Uterus (tissue), 4 donors: ENCODE measurements at regions of chr9 and their contacts with region 1.

Region 1: DNA sequence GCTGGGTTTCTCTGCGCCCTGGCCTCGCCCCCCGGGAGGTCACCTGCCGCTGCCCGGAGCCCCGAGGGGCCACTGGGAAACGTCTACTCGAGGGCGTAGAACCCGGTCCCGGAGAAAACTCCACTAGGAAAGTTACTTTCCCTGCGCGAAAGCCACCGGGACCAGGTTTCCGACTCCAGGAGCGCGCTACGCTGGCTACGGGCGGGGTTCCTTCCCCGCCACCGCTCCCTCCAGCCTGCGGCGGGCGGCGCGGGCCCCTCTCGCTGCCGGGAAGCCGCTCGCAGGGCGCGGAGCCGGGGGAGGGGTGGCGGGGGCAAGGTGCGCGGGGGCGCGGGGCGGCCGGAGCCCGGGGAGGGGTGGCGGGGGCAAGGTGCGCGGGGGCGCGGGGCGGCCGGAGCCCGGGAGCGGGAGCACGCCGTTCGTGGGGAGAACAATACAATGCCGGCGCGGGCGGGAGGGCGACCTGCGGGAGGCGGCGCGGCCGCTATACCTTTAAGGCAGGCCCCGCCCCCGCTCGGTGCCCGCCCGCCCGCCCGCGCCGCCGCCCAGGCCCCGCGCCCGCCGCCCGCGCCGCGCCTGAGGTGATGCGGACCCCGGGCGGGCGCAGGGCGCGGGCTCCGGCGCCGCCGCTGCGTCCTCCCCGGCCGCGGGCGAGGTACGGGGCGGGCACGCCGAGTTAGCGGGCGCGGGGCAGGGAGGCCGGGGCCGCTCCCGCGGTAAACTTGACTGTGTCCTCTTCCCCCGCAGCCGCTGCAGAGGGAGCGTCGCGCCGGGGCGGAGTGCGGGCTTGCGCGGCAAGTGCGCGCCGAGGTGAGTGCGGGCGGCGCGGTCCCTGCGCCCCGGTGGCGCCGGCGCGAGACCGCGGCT is 278.1 kb downstream of the AOPEP start:
- DNase-seq: peak; percentile 54 to 72
- H3K4me3 ChIP-seq: peak overlapping the region; percentile 75 to 88
- H3K27ac ChIP-seq: peak overlapping the region; percentile 100
- H3K4me1 ChIP-seq: peaks cover 0 to 6% of the 10 kb centered on the region in 2 donors
- H3K27me3 ChIP-seq: no peaks in the 10 kb centered on the region
- CTCF ChIP-seq: peak in 1 of 4 experiments; percentile 11
- POLR2A ChIP-seq: peak; percentile 39 to 51

Region 2: GRCh38 chr9:94783102-94783664 is 221.5 kb before region 1 on chr9:
- intact Hi-C with region 1: loop called (anchors 10 kb)
- DNase-seq: peak; percentile 68 to 87
- H3K4me3 ChIP-seq: no peak overlapping the region
- H3K27ac ChIP-seq: peak overlapping the region; percentile 51 to 64
- H3K4me1 ChIP-seq: no peaks in the 10 kb centered on the region
- H3K27me3 ChIP-seq: no peaks in the 10 kb centered on the region
- CTCF ChIP-seq: peak; percentile 73 to 80 (median 76)
- POLR2A ChIP-seq: no peak

Region 3: GRCh38 chr9:94922098-94922607 is 82.5 kb before region 1 on chr9:
- intact Hi-C with region 1: loop called (anchors 5 kb)
- DNase-seq: peak; percentile 52 to 64
- H3K4me3 ChIP-seq: no peak overlapping the region
- H3K27ac ChIP-seq: peak overlapping the region; percentile 93 to 95
- H3K4me1 ChIP-seq: peaks cover 18 to 27% of the 10 kb centered on the region in 2 donors
- H3K27me3 ChIP-seq: no peaks in the 10 kb centered on the region
- CTCF ChIP-seq: no peak
- POLR2A ChIP-seq: no peak